Left colon (tissue), 2 donors: ENCODE measurements at regions of chr6 and their contacts with region 1.

Region 1: DNA sequence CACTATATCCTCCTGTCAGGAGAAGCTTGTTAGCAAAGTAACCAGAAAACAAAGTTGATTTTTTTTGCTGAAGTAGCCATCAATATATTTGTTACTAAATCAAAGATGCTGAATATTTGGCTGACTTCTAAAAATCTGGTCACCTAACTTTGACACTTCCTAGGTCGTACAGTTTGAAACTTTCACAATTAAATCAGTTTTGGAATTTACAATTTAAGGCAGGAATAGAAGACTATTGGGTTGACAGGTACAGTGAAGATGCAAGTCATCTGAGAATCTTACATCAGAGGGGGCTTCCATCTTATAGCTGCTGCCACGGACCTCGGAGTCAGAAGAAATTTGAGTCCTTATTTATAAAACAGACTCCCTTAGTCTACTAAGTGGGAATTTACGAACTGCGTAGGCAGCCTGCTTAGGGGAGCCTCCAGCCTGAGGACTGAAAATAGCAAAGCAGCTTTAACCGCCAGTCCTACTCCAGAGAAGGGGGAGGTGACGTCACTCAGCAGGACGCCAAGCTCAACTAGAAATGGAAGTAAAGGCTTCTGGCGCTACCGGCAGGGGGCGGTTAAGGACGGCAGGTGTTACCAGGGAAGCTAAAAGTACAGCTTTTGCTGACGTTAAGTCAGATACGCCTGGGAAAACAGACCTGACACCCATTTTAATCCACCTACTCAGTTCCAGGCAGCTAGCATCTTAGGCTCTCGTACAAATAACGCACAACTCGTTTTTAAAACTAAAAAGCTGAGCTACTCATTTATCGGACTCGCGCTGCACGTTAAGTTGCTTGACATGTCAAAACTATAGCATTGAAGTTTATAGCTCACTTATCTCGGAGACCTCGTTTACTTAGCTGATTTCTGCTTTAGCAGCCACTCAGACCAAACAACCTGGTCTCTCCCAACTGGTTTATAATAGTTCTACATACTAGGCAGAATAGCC is 61.1 kb upstream of the HFE start:
- DNase-seq: peak; percentile 97 to 98
- ATAC-seq: peak; percentile 67

Region 2: GRCh38 chr6:25942561-25943147 is 83.5 kb before region 1 on chr6:
- intact Hi-C with region 1: no loop called
- DNase-seq: no peak
- ATAC-seq: peak; percentile 63

Region 3: GRCh38 chr6:26204332-26205165 is 178.4 kb after region 1 on chr6:
- intact Hi-C with region 1: loop called in 1 of 2 experiments (anchors 10 kb)
- DNase-seq: peak; percentile 91 to 97
- ATAC-seq: peak; percentile 77